ENCODE measurements at regions of chr22 and their contacts with region 1.

Region 1: DNA sequence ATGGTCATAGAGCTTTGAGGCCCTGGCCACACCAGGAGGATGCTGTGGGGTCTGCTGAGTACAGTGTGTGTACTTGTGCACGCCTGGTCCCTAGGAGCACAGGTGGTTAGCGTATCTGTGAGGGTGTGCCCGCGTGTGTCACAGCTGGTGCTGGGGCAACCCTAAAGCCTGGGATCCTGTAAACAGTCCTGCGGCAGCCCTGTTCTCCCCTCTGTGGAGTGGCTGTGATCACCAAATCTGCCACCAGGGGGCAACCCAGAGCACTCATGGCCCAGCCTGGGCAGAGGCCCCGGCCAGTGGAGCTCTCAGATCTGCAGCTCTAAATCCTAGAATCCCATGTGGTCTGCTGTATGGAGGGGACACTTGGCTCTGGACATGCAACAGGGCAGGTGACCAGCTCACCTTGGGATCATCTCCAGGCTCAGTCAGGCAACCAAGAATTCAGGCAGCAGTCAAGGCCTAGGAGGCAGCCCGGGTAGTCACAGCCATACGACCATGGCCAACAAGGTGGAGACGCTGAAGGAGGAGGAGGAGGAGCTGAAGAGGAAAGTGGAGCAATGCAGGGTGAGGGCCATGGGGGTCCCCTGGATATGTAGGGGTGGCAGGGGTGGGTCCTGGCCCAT is 3.9 kb downstream of the SH3BP1 start:
- DNase-seq: peak; percentile 82 to 92 (median 85)
- ATAC-seq: peak; percentile 81 to 90 (median 86)
- H3K4me3 ChIP-seq: no peak overlapping the region
- H3K27ac ChIP-seq: no peak overlapping the region
- H3K4me1 ChIP-seq: peaks cover 0 to 53% (median 15%) of the 10 kb centered on the region in 12 donors
- H3K27me3 ChIP-seq: peaks cover 0 to 9% (median 0%) of the 10 kb centered on the region in 9 donors
- CTCF ChIP-seq: peak; percentile 84 to 98 (median 94)
- POLR2A ChIP-seq: no peak

Region 2: GRCh38 chr22:37676736-37677492 is 33.6 kb after region 1 on chr22:
- intact Hi-C with region 1: loop called (anchors 1 to 5 kb)
- DNase-seq: peak; percentile 88 to 91 (median 90)
- ATAC-seq: peak in 3 of 4 donors; percentile 48 to 59 (median 48)
- H3K4me3 ChIP-seq: peak overlapping the region; percentile 52 to 92 (median 71)
- H3K27ac ChIP-seq: peak overlapping the region; percentile 74 to 99 (median 96)
- H3K4me1 ChIP-seq: peaks cover 3 to 68% (median 39%) of the 10 kb centered on the region in 12 donors
- H3K27me3 ChIP-seq: no peaks in the 10 kb centered on the region
- CTCF ChIP-seq: no peak
- POLR2A ChIP-seq: no peak

Region 3: DNA sequence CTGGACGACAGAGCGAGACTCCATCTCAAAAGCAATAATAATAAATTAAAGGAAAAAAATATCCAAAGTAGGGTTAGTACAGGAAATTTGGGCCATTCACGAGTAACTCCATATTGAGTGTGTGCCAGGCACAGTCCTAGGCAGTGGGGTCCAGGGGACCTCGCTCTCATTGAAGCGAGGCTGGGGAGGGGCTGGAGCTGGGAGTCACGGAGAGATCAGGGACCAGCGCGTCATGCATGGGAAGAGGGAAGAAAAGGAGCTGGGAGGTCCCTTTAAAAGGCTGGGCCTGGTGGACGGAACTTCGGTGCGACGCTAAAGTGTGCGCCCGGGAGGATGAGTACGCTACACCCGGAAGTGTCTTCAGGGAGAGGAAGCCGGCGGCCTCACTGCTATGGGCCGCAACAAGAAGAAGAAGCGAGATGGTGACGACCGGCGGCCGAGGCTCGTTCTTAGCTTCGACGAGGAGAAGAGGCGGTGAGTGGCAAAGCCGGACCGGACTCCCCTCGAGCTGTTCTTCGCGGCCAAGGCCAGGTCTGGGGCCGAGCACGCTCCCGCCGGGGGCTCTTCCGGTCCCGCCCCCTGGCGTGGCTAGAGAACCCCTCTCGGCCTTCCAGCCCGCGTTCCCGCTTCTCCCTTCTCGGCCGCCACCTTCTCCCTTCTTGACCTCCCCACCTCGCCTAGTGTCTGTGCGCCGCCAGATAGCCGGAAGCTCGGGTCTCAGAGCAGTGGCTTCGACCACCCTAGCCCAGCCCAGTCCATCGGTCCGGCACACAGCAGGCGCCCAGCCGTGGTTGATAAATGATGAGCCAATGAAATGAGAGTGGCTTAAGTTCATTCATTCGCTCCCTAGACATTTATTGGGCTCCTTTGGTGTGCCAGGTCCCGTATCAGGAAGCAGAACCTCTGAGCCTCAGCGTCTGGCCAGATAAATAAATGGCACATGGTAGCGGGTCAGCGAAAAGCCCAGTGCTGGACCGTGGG is 43.0 kb after region 1 on chr22 and contains the start of gene NOL12:
- intact Hi-C with region 1: loop called (anchors 1 to 5 kb)
- DNase-seq: peak; percentile 83 to 90 (median 85)
- ATAC-seq: peak; percentile 79 to 96 (median 92)
- H3K4me3 ChIP-seq: peak within 1 kb of the TSS; percentile 59 to 92 (median 84)
- H3K27ac ChIP-seq: peak within 1 kb of the TSS; percentile 59 to 97 (median 90)
- H3K4me1 ChIP-seq: peaks cover 4 to 28% (median 17%) of the 10 kb centered on the region in 12 donors
- H3K27me3 ChIP-seq: no peaks in the 10 kb centered on the region
- CTCF ChIP-seq: peak in 2 of 12 donors; percentile 7 to 41
- POLR2A ChIP-seq: no peak
- total RNA-seq, gene NOL12: 8.0 to 16.3 (median 13.8) TPM

Region 4: DNA sequence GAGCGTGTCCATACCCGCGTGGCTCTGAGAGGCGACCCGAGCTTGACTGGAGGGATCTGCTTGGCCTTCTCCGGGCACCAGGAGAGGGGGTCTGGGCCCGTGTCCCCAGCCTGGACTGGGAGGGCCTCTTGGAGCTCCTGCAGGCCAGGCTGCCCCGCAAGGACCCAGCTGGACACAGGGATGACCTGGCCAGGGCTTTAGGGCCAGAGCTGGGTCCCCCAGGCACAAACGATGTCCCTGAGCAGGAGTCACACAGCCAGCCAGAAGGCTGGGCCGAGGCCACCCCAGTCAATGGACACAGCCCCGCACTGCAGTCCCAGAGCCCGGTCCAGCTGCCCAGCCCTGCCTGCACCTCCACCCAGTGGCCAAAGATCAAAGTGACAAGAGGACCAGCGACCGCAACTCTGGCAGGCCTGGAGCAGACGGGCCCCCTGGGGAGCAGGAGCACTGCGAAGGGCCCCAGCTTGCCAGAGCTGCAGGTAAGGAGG is 91.7 kb after region 1 on chr22:
- intact Hi-C with region 1: loop called in 2 of 10 experiments (anchors 5 to 10 kb)
- DNase-seq: peak in 2 of 5 donors; percentile 53 to 62
- ATAC-seq: peak in 3 of 4 donors; percentile 29 to 44 (median 41)
- H3K4me3 ChIP-seq: no peak overlapping the region
- H3K27ac ChIP-seq: no peak overlapping the region
- H3K4me1 ChIP-seq: peaks cover 0 to 29% (median 6%) of the 10 kb centered on the region in 12 donors
- H3K27me3 ChIP-seq: no peaks in the 10 kb centered on the region
- CTCF ChIP-seq: peak; percentile 18 to 49 (median 36)
- POLR2A ChIP-seq: no peak

Region 5: DNA sequence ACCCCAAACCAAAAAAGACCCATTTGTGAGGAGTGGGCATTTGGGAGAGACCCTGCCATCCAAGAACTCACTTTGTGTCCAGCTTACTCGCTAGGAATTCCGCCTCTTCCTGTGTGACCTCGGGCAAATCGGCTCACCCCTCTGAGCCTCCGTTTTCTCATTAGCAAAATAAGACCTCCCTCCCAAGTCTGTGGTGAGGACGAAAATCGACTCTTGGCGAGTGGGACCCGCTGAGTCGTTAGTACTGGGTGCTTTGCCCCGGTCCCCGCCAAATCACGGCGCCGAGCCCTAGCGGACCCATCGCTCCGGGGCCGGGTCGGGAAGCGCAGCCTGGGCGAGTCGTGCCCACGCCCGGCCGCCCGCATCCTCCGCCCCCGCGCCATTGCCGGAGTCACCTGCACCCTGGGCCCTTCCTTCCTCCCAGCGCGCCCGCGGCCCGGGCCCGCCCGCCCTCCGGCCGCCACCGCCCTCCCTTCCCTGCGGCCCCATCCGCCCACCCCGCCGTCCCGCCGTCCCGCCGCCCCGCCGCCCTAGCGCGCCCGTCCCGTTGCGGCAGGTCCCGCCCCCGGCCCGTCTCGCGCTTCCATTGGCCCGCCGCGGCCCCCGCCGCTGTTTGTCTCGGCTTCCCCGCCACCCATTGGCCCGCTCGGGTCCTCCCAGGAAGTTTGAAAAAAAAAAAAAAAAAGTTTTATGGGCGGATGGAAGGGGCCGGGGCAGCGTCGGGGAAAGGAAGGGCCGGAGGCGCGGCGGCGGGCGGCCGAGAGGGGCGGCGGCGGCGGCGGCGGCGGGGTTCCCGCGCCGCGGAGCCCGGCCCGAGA is 102.4 kb after region 1 on chr22:
- intact Hi-C with region 1: loop called in 1 of 10 experiments (anchors 5 kb)
- DNase-seq: peak; percentile 94 to 96 (median 95)
- ATAC-seq: peak; percentile 65 to 76 (median 70)
- H3K4me3 ChIP-seq: peak overlapping the region; percentile 82 to 100 (median 97)
- H3K27ac ChIP-seq: peak overlapping the region; percentile 95 to 100 (median 99)
- H3K4me1 ChIP-seq: peaks cover 16 to 76% (median 58%) of the 10 kb centered on the region in 12 donors
- H3K27me3 ChIP-seq: no peaks in the 10 kb centered on the region
- CTCF ChIP-seq: no peak
- POLR2A ChIP-seq: peak in 1 of 2 donors; percentile 45

Region 6: DNA sequence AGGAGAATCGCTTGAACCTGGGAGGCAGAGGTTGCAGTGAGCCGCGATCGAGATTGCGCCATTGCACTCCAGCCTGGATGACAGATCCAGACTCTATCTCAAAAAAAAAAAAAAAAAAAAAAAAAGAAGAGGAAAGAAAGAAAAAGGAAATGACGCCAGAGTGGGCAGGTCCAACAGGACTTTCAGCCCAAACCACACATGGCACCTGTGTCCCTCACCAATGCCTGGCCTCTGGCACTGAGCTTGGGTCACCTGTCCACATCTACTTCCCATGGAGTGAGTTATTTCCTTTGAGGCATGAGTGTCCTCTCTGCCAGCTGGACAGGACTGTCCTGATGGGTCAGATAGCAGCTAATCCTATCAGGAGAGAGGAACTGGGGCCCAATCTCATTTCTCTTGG is 149.2 kb after region 1 on chr22:
- intact Hi-C with region 1: loop called in 9 of 10 experiments (anchors 1 to 10 kb)
- DNase-seq: no peak
- ATAC-seq: no peak
- H3K4me3 ChIP-seq: no peak overlapping the region
- H3K27ac ChIP-seq: no peak overlapping the region
- H3K4me1 ChIP-seq: no peaks in the 10 kb centered on the region
- H3K27me3 ChIP-seq: no peaks in the 10 kb centered on the region
- CTCF ChIP-seq: no peak
- POLR2A ChIP-seq: no peak

Region 7: GRCh38 chr22:37802310-37803194 is 159.2 kb after region 1 on chr22:
- intact Hi-C with region 1: loop called in 1 of 10 experiments (anchors 10 kb)
- DNase-seq: peak; percentile 71 to 80 (median 73)
- ATAC-seq: peak in 3 of 4 donors; percentile 16 to 29 (median 26)
- H3K4me3 ChIP-seq: peak overlapping the region; percentile 54 to 83 (median 66)
- H3K27ac ChIP-seq: peak overlapping the region in 7 of 12 donors; percentile 40 to 69 (median 53)
- H3K4me1 ChIP-seq: peaks cover 0 to 43% (median 21%) of the 10 kb centered on the region in 12 donors
- H3K27me3 ChIP-seq: peaks cover 0 to 2% (median 0%) of the 10 kb centered on the region in 9 donors
- CTCF ChIP-seq: no peak
- POLR2A ChIP-seq: no peak

Region 8: GRCh38 chr22:38088629-38089473 is 445.5 kb after region 1 on chr22:
- intact Hi-C with region 1: no loop called
- DNase-seq: no peak
- ATAC-seq: peak in 3 of 4 donors; percentile 40 to 61 (median 45)
- H3K4me3 ChIP-seq: peak overlapping the region in 10 of 12 donors; percentile 18 to 45 (median 36)
- H3K27ac ChIP-seq: no peak overlapping the region
- H3K4me1 ChIP-seq: peaks cover 0 to 13% (median 5%) of the 10 kb centered on the region in 12 donors
- H3K27me3 ChIP-seq: peaks cover 0 to 19% (median 5%) of the 10 kb centered on the region in 9 donors
- CTCF ChIP-seq: no peak
- POLR2A ChIP-seq: no peak

Measured in heart left ventricle (tissue), 16 donors.